Aorta (tissue), 5 donors: ENCODE measurements at regions of chr20 and their contacts with region 1.

Region 1: GRCh38 chr20:47785854-47786764 is 828 bp upstream of the SULF2 start:
- DNase-seq: peak; percentile 80 to 88
- ATAC-seq: peak; percentile 89
- H3K4me3 ChIP-seq: peak overlapping the region; percentile 51 to 88
- H3K27ac ChIP-seq: peak overlapping the region; percentile 14 to 36
- H3K4me1 ChIP-seq: no peaks in the 10 kb centered on the region
- H3K27me3 ChIP-seq: no peaks in the 10 kb centered on the region

Region 2: GRCh38 chr20:47663333-47664067 is 122.6 kb before region 1 on chr20:
- intact Hi-C with region 1: loop called in 1 of 2 experiments (anchors 5 kb)
- DNase-seq: peak; percentile 81 to 93
- ATAC-seq: peak; percentile 90
- H3K4me3 ChIP-seq: no peak overlapping the region
- H3K27ac ChIP-seq: no peak overlapping the region
- H3K4me1 ChIP-seq: no peaks in the 10 kb centered on the region
- H3K27me3 ChIP-seq: no peaks in the 10 kb centered on the region

Region 3: DNA sequence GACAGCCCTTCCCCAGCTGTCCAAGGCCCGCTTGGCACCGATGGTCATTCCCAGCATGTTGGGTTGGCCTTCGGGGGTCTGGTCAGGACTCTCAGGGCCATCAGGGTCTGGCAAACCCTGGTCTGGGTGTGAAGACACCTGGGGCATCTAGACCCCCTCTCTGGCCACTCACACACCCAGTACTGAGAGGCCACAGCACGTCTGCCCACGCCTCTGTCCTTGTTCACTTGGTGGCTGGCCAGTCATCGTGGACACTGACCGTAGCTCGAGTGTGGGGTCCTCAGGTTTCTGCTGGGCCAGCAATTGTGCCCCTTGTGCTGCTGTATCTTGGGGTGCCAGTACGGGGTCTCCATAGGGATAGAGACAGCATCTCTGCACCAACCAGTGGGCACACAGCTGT is 53.1 kb after region 1 on chr20:
- intact Hi-C with region 1: no loop called
- DNase-seq: no peak
- ATAC-seq: peak; percentile 26
- H3K4me3 ChIP-seq: no peak overlapping the region
- H3K27ac ChIP-seq: no peak overlapping the region
- H3K4me1 ChIP-seq: no peaks in the 10 kb centered on the region
- H3K27me3 ChIP-seq: no peaks in the 10 kb centered on the region

Region 4: GRCh38 chr20:47875714-47875998 is 89.5 kb after region 1 on chr20:
- intact Hi-C with region 1: no loop called
- DNase-seq: no peak
- ATAC-seq: no peak
- H3K4me3 ChIP-seq: no peak overlapping the region
- H3K27ac ChIP-seq: no peak overlapping the region
- H3K4me1 ChIP-seq: no peaks in the 10 kb centered on the region
- H3K27me3 ChIP-seq: peaks cover 0 to 3% of the 10 kb centered on the region in 2 donors

Region 5: GRCh38 chr20:48283305-48284080 is 497.4 kb after region 1 on chr20:
- intact Hi-C with region 1: loop called in 1 of 2 experiments (anchors 10 kb)
- DNase-seq: peak; percentile 78 to 88
- ATAC-seq: peak; percentile 81
- H3K4me3 ChIP-seq: no peak overlapping the region
- H3K27ac ChIP-seq: peak overlapping the region in 1 of 2 donors; percentile 22
- H3K4me1 ChIP-seq: peaks cover 3 to 6% of the 10 kb centered on the region in 2 donors
- H3K27me3 ChIP-seq: no peaks in the 10 kb centered on the region

Region 6: GRCh38 chr20:48295445-48295963 is 509.4 kb after region 1 on chr20:
- intact Hi-C with region 1: loop called in 1 of 2 experiments (anchors 5 kb)
- DNase-seq: no peak
- ATAC-seq: peak; percentile 63
- H3K4me3 ChIP-seq: no peak overlapping the region
- H3K27ac ChIP-seq: peak overlapping the region; percentile 16 to 92
- H3K4me1 ChIP-seq: no peaks in the 10 kb centered on the region
- H3K27me3 ChIP-seq: no peaks in the 10 kb centered on the region